ENCODE measurements at regions of chr22 and their contacts with region 1.

Region 1: GRCh38 chr22:36781656-36782627 is 6.0 kb upstream of the IFT27 start:
- DNase-seq: peak; percentile 55 to 93 (median 84)
- ATAC-seq: peak; percentile 87 to 99 (median 97)
- H3K4me3 ChIP-seq: no peak overlapping the region
- H3K27ac ChIP-seq: no peak overlapping the region
- H3K4me1 ChIP-seq: no peaks in the 10 kb centered on the region
- H3K27me3 ChIP-seq: no peaks in the 10 kb centered on the region
- CTCF ChIP-seq: peak; percentile 85 to 94 (median 90)

Region 2: DNA sequence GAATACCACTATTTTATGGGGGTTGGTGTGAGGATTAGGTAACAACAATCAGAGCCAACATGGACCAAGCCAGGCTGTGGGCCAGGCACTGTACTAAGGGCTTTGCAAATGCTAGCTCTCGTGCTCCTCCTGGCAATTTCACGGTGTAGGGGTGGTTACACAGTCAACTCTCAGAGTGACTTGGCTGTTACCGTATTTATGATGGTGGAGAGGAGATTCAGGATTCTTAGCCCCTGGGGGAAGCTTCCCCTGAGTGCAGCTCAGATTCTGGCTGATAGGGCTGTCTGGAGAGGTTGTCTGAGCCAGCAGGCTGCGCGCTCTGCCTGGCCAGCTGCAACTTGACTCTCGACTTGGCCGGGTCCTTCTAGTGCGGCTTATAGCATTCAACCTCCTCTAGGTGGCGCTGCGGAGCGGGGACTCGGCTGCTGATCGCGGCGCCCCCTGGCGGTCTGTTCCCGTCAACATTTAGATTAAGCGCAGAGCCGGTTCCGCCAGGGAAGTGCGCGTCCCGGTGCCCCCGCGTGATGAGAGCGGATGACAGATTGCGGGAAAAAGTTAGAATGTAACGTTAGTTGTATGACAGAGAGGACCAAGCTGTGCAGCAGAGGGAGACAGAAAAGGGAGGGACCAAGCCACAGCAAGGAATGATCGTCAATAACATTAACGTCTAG is 74.3 kb after region 1 on chr22:
- intact Hi-C with region 1: loop called in 1 of 3 experiments (anchors 5 kb)
- DNase-seq: peak; percentile 79 to 99 (median 92)
- ATAC-seq: peak; percentile 91 to 97 (median 96)
- H3K4me3 ChIP-seq: no peak overlapping the region
- H3K27ac ChIP-seq: no peak overlapping the region
- H3K4me1 ChIP-seq: no peaks in the 10 kb centered on the region
- H3K27me3 ChIP-seq: no peaks in the 10 kb centered on the region
- CTCF ChIP-seq: peak; percentile 100

Region 3: DNA sequence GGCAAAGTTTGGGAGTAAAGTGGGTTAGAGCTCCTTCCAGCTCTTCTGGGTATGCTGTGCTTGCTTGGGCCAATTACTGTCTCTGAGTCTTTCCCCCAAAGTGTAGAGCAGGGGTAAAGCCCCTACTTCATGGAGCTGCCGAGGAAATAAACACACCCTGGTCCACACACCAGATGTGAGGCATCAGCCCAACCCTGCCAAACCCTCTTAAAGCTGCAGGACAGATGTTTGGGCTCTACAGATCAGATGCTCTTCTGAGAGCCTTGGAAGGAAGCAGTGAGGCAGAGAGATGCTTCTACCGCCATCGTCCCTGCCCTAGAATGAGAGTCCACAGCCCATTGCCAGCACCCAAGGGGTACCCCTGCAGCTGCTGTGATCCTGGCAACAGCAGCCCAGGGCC is 580.7 kb after region 1 on chr22:
- intact Hi-C with region 1: no loop called
- DNase-seq: no peak
- ATAC-seq: no peak
- H3K4me3 ChIP-seq: no peak overlapping the region
- H3K27ac ChIP-seq: no peak overlapping the region
- H3K4me1 ChIP-seq: no peaks in the 10 kb centered on the region
- H3K27me3 ChIP-seq: no peaks in the 10 kb centered on the region
- CTCF ChIP-seq: no peak